GM12878 (cell line): ENCODE measurements at regions of chr13 and their contacts with region 1.

Region 1: GRCh38 chr13:51614350-51614786 is 30.1 kb downstream of the WDFY2 start:
- DNase-seq: peak; percentile 56
- ATAC-seq: peak; percentile 71
- H3K4me3 ChIP-seq: peak overlapping the region; percentile 53
- H3K27ac ChIP-seq: peak overlapping the region; percentile 78
- H3K4me1 ChIP-seq: peaks cover 4% of the 10 kb centered on the region
- H3K27me3 ChIP-seq: no peaks in the 10 kb centered on the region
- CTCF ChIP-seq: no peak
- EP300 ChIP-seq: no peak
- POLR2A ChIP-seq: peak; percentile 83
- RAD21 ChIP-seq: 0 out of 2 replicates have a peak, but pooled peaks have one; percentile 1

Region 2: DNA sequence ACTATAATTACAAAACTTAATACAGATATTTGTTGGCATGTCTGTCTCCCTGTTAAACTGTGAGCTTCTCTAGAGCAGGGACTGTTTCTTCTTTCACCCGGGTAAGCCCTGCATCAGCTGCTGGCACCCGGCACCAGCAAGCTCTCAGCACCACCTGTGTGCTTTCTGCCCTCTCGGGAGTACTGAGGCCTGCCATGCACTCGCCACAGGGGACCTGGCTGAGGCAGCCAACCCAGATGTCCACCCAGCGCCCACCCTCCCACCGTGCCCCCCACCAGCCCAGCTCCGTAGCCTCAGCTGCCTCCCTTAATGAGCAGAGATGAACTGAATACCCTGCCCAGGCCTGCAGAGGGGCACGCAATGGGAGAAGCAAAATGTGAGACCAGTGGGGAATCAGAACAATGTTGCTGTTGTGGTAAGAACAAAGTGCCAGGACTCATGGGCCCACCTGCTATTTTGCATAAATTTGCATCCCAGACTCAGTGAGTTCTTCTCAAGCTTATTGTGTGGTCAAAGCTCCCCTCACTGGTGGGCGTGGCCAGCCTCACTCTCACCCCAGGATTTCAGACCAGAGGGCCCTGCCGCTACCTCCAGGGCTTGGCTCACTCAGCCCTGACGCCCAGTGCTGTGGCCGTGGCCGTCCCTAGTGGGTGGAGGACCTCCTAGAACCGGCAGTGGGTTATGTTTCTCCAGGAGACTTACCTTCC is 289.5 kb before region 1 on chr13:
- CTCF ChIA-PET with region 1: no interaction called
- POLR2A ChIA-PET with region 1: no interaction called
- RAD21 ChIA-PET with region 1: no interaction called
- SMC1A ChIA-PET with region 1: no interaction called
- in situ Hi-C with region 1: no loop called
- intact Hi-C with region 1: no loop called
- DNase-seq: no peak
- ATAC-seq: peak; percentile 72
- H3K4me3 ChIP-seq: no peak overlapping the region
- H3K27ac ChIP-seq: no peak overlapping the region
- H3K4me1 ChIP-seq: peaks cover 6% of the 10 kb centered on the region; the same call in 1 of the 2 replicates
- H3K27me3 ChIP-seq: no peaks in the 10 kb centered on the region
- CTCF ChIP-seq: no peak
- EP300 ChIP-seq: no peak
- POLR2A ChIP-seq: no peak
- RAD21 ChIP-seq: no peak

Region 3: GRCh38 chr13:51397262-51397941 is 217.0 kb before region 1 on chr13:
- CTCF ChIA-PET with region 1: no interaction called
- POLR2A ChIA-PET with region 1: no interaction called
- RAD21 ChIA-PET with region 1: no interaction called
- SMC1A ChIA-PET with region 1: no interaction called
- in situ Hi-C with region 1: no loop called
- intact Hi-C with region 1: no loop called
- DNase-seq: no peak
- ATAC-seq: peak; percentile 42; the same call in 2 of the 3 replicates
- H3K4me3 ChIP-seq: no peak overlapping the region
- H3K27ac ChIP-seq: no peak overlapping the region
- H3K4me1 ChIP-seq: no peaks in the 10 kb centered on the region; the same call in 1 of the 2 replicates
- H3K27me3 ChIP-seq: no peaks in the 10 kb centered on the region
- CTCF ChIP-seq: no peak
- EP300 ChIP-seq: no peak
- POLR2A ChIP-seq: no peak
- RAD21 ChIP-seq: no peak

Region 4: GRCh38 chr13:51425410-51426042 is 188.8 kb before region 1 on chr13:
- CTCF ChIA-PET with region 1: no interaction called
- POLR2A ChIA-PET with region 1: no interaction called
- RAD21 ChIA-PET with region 1: no interaction called
- SMC1A ChIA-PET with region 1: no interaction called
- in situ Hi-C with region 1: no loop called
- intact Hi-C with region 1: no loop called
- DNase-seq: no peak
- ATAC-seq: no peak
- H3K4me3 ChIP-seq: no peak overlapping the region
- H3K27ac ChIP-seq: no peak overlapping the region
- H3K4me1 ChIP-seq: peaks cover 31% of the 10 kb centered on the region
- H3K27me3 ChIP-seq: no peaks in the 10 kb centered on the region
- CTCF ChIP-seq: no peak
- EP300 ChIP-seq: no peak
- POLR2A ChIP-seq: no peak
- RAD21 ChIP-seq: no peak

Region 5: GRCh38 chr13:51590971-51591627 is 23.3 kb before region 1 on chr13:
- CTCF ChIA-PET with region 1: interaction called, 5 read pairs
- POLR2A ChIA-PET with region 1: interaction called, 21 read pairs
- RAD21 ChIA-PET with region 1: interaction called, 16 read pairs
- SMC1A ChIA-PET with region 1: interaction called, 38 read pairs
- in situ Hi-C with region 1: no loop called
- intact Hi-C with region 1: no loop called
- DNase-seq: no peak
- ATAC-seq: peak; percentile 27
- H3K4me3 ChIP-seq: no peak overlapping the region; the same call in 1 of the 2 replicates
- H3K27ac ChIP-seq: peak overlapping the region; percentile 18; the same call in 1 of the 2 replicates
- H3K4me1 ChIP-seq: peaks cover 3% of the 10 kb centered on the region; the same call in 1 of the 2 replicates
- H3K27me3 ChIP-seq: no peaks in the 10 kb centered on the region
- CTCF ChIP-seq: no peak
- EP300 ChIP-seq: no peak
- POLR2A ChIP-seq: no peak
- RAD21 ChIP-seq: 0 out of 2 replicates have a peak, but pooled peaks have one; percentile 13

Region 6: DNA sequence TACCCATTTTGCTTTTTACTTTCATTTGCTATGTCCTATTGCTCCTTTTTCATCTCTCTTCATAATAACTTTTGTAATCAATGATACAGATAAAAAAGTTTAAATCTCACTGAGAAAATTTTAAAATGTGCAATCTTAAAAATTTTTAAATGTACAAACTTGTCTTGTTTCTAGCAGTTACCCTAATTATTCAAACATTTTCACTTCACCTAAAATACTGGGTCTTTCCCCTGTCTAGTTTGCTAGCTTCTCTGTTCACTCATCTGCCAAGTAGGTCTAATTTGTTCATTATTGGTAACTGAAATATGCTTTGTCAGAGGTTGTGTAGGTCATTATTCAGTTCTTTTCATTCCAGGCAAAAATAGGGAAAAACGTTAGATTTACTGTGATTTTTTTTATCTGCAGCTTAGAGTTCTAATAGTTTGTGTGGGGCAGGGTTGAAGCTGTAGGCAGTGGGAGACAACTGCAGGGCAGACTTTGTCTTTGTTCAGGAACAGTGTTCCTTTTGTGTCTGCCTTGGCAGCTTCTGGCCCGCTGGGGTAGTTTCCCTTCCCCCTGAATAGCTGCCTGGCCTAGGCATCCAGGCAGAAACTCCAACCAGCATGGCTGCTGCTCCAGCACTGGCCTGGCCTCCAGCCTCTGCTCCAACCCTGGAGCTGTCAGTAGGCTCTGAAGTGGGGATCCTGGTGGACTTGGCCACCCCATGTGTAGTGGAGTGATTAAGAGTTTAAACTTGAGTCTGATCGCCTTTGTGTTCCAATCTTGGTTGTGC is 18.4 kb after region 1 on chr13:
- CTCF ChIA-PET with region 1: interaction called, 7 read pairs
- POLR2A ChIA-PET with region 1: interaction called, 6 read pairs
- RAD21 ChIA-PET with region 1: interaction called, 6 read pairs
- SMC1A ChIA-PET with region 1: interaction called, 15 read pairs
- in situ Hi-C with region 1: no loop called
- intact Hi-C with region 1: no loop called
- DNase-seq: no peak
- ATAC-seq: peak; percentile 66
- H3K4me3 ChIP-seq: 0 out of 2 replicates have a peak overlapping the region, but pooled peaks have one; percentile 35
- H3K27ac ChIP-seq: no peak overlapping the region
- H3K4me1 ChIP-seq: peaks cover 4% of the 10 kb centered on the region; the same call in 1 of the 2 replicates
- H3K27me3 ChIP-seq: no peaks in the 10 kb centered on the region
- CTCF ChIP-seq: no peak
- EP300 ChIP-seq: no peak
- POLR2A ChIP-seq: no peak
- RAD21 ChIP-seq: no peak